PC-3 (cell line): ENCODE measurements at regions of chr10 and their contacts with region 1.

Region 1: DNA sequence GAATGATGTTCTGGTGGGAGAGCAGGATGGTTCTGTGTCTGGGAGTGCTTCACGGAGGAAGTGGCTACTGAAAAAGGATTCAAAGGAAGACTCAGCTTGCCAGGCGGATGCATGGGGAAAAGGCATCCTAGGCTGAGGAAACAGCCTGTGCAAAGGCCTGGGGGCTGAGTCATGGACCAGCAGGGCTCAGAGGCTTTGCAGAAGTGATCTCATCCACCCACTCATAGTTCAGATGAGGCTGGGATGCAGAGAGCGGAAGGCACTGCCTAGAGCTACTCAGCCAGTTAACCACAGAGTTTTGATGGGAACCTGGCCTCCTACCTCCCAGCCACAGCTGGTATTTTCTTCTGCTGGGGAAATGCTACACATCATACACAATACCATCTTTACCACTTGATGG is 15.8 kb upstream of the ADAMTS14 start:
- DNase-seq: peak; percentile 100
- ATAC-seq: peak; percentile 97
- H3K4me3 ChIP-seq: no peak overlapping the region
- H3K27ac ChIP-seq: peak overlapping the region; percentile 87
- H3K4me1 ChIP-seq: peaks cover 39% of the 10 kb centered on the region
- H3K27me3 ChIP-seq: no peaks in the 10 kb centered on the region
- CTCF ChIP-seq: no peak

Region 2: GRCh38 chr10:70575874-70576802 is 80.4 kb before region 1 on chr10:
- CTCF ChIA-PET with region 1: no interaction called
- POLR2A ChIA-PET with region 1: no interaction called
- intact Hi-C with region 1: loop called (anchors 5 kb)
- DNase-seq: peak; percentile 87
- ATAC-seq: peak; percentile 12; the same call in 1 of the 2 replicates
- H3K4me3 ChIP-seq: no peak overlapping the region
- H3K27ac ChIP-seq: peak overlapping the region; percentile 28
- H3K4me1 ChIP-seq: peaks cover 47% of the 10 kb centered on the region
- H3K27me3 ChIP-seq: no peaks in the 10 kb centered on the region
- CTCF ChIP-seq: no peak

Region 3: DNA sequence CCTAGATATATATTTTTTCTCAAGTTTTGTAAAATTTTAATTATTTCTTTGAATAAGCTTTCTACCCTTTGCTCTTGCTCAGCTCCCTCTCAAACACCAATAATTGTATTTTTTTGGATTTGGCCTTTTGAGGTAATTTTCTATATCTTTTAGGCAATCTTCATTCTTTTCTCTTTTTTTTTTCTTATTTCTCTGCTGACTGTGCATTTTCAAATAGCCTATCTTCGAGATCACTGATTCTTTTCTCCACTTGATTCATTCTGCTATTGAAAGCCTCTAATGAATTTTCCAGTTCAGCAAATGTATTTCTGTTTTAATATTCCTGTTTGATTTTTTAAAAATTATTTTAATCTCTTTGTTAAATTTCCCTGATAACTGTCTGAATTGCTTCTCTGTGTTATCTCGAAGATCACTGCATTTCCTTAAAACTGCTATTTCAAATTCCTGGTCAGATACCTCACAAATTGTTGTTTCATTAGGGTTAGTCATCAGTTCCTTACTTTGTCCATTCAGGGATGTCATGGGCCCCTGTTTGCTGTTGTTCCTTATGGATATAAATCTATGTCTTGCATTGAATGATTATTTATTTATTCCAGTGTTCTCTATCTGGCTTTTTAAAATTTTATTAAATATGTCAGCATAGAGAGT is 455.8 kb after region 1 on chr10:
- CTCF ChIA-PET with region 1: no interaction called
- POLR2A ChIA-PET with region 1: no interaction called
- intact Hi-C with region 1: no loop called
- DNase-seq: no peak
- ATAC-seq: no peak
- H3K4me3 ChIP-seq: no peak overlapping the region
- H3K27ac ChIP-seq: no peak overlapping the region
- H3K4me1 ChIP-seq: no peaks in the 10 kb centered on the region
- H3K27me3 ChIP-seq: peaks cover 15% of the 10 kb centered on the region
- CTCF ChIP-seq: no peak